Left colon (tissue), 2 donors: ENCODE measurements at regions of chr12 and their contacts with region 1.

Region 1: GRCh38 chr12:101773650-101774162 is 34.4 kb upstream of the SYCP3 start:
- DNase-seq: peak; percentile 39 to 54
- ATAC-seq: peak; percentile 77

Region 2: GRCh38 chr12:101830367-101831325 is 56.9 kb after region 1 on chr12 and contains the start of gene GNPTAB:
- intact Hi-C with region 1: loop called in 1 of 2 experiments (anchors 10 kb)
- DNase-seq: peak; percentile 91 to 96
- ATAC-seq: peak; percentile 89
- total RNA-seq, gene GNPTAB: 90.2 to 95.1 TPM

Region 3: DNA sequence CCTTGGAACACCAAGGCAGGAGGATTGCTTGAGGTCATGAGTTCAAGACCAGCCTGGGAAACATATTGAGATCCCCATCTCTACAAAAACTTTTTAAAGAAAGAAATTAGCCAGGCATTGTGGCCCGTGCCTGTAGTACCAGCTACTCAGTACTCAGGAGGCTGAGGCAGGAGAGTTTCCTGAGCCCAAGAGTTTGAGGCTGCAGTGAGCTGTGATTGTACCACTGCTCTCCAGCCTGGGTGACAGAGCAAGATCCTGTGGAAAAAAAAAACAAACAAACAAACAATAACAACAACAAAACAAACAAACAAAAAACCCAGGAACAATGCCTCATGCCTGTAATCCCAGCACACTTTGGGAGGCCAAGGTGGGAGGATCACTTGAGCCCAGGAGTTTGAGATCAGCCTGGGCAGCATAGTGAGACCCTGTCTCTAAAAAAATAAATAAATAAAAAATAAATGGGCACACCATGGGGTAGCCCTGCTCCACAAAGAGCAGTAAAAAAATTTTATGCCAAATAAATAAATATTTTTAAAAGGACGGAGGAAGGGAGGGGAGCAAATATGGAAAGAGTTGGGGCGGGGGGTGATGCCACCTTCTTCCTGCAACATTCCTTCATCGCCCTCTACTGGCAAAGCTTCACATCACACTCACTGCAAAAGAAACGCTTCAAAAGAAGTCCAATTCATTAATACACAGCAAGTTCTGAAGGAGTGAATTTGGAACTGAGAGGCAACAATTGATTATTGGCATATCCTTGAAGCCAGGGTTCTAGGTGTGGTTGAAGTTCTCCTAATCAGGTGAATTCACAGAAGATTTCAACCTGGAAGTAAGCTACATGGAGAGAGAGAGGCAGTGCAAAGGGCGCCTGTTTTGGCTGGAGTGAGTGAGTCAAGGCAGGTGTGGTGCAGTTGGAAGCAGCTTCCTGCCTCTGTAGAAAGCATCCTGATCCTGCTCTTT is 65.9 kb after region 1 on chr12:
- intact Hi-C with region 1: loop called (anchors 2 to 10 kb)
- DNase-seq: peak; percentile 53 to 75
- ATAC-seq: peak; percentile 98

Region 4: GRCh38 chr12:101925361-101925760 is 151.7 kb after region 1 on chr12:
- intact Hi-C with region 1: no loop called
- DNase-seq: peak; percentile 16 to 48
- ATAC-seq: no peak